ENCODE measurements at regions of chr11 and their contacts with region 1.

Region 1: DNA sequence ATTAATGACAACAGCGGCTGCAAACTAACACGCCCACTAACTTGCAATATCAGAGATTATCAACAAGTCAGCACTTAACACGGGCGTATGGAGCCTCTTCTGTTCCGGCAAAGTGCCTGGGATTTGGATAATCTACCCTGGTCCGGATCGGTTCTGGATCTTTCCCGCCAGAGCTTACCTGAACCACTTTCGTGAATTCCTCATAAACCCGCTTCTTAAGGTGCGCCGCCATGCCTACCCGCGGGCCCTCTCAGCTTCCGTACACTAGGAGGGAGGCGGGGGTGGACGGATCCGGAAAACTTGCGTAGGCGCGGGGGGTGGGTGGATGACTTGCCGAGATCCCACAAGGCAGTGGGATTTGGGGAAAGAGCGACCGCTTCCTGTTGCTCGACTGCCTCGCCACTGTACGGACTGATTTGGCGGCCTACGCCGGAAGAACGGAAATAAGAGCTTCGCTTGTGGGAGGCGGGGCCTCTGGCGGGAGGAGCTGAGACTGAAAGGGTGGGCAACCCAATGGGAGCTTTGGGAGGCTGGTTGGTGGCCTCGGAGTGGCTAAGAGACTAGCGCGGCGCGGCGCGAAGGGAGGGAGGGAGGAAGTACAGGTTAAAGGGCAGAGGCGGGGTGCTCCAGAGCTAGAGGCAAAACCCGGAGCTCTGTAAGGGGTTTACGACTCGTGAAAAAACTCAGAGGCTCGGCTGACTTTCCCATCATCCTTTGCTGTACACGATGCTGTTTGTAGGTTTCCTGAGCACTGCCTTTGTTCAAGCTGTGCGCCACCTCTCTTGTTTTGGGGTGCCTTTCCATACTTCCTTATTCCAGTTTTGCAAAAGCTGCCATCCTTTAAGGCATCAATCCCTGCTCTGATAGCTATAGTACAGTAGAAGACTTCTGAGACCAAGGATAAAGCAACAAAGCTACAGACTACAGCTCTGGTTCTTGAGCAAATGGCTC is at the start of gene INTS4:
- DNase-seq: peak; percentile 100
- H3K4me3 ChIP-seq: peak within 1 kb of the TSS; percentile 64
- H3K27ac ChIP-seq: peak within 1 kb of the TSS; percentile 72
- H3K4me1 ChIP-seq: peaks cover 9% of the 10 kb centered on the region
- H3K27me3 ChIP-seq: no peaks in the 10 kb centered on the region
- CTCF ChIP-seq: no peak
- total RNA-seq, gene INTS4: 66.1 and 68.2 TPM in 2 replicates

Region 2: GRCh38 chr11:77637345-77638165 is 357.1 kb before region 1 on chr11 and contains the start of gene CLNS1A:
- CTCF ChIA-PET with region 1: no interaction called
- POLR2A ChIA-PET with region 1: no interaction called
- intact Hi-C with region 1: loop called (anchors 10 kb)
- DNase-seq: peak; percentile 97
- H3K4me3 ChIP-seq: peak within 1 kb of the TSS; percentile 92
- H3K27ac ChIP-seq: peak within 1 kb of the TSS; percentile 87
- H3K4me1 ChIP-seq: peaks cover 12% of the 10 kb centered on the region
- H3K27me3 ChIP-seq: no peaks in the 10 kb centered on the region
- CTCF ChIP-seq: no peak
- total RNA-seq, gene CLNS1A: 186 and 198 TPM in 2 replicates

Region 3: GRCh38 chr11:77734890-77735289 is 259.8 kb before region 1 on chr11:
- CTCF ChIA-PET with region 1: no interaction called
- POLR2A ChIA-PET with region 1: no interaction called
- intact Hi-C with region 1: no loop called
- DNase-seq: no peak
- H3K4me3 ChIP-seq: no peak overlapping the region
- H3K27ac ChIP-seq: no peak overlapping the region
- H3K4me1 ChIP-seq: no peaks in the 10 kb centered on the region
- H3K27me3 ChIP-seq: no peaks in the 10 kb centered on the region
- CTCF ChIP-seq: no peak

Region 4: GRCh38 chr11:77776455-77776854 is 218.2 kb before region 1 on chr11:
- CTCF ChIA-PET with region 1: interaction called, 7 read pairs
- POLR2A ChIA-PET with region 1: no interaction called
- intact Hi-C with region 1: loop called (anchors 2 kb)
- DNase-seq: peak; percentile 50
- H3K4me3 ChIP-seq: no peak overlapping the region
- H3K27ac ChIP-seq: no peak overlapping the region
- H3K4me1 ChIP-seq: peaks cover 14% of the 10 kb centered on the region
- H3K27me3 ChIP-seq: no peaks in the 10 kb centered on the region
- CTCF ChIP-seq: peak; percentile 59

Region 5: DNA sequence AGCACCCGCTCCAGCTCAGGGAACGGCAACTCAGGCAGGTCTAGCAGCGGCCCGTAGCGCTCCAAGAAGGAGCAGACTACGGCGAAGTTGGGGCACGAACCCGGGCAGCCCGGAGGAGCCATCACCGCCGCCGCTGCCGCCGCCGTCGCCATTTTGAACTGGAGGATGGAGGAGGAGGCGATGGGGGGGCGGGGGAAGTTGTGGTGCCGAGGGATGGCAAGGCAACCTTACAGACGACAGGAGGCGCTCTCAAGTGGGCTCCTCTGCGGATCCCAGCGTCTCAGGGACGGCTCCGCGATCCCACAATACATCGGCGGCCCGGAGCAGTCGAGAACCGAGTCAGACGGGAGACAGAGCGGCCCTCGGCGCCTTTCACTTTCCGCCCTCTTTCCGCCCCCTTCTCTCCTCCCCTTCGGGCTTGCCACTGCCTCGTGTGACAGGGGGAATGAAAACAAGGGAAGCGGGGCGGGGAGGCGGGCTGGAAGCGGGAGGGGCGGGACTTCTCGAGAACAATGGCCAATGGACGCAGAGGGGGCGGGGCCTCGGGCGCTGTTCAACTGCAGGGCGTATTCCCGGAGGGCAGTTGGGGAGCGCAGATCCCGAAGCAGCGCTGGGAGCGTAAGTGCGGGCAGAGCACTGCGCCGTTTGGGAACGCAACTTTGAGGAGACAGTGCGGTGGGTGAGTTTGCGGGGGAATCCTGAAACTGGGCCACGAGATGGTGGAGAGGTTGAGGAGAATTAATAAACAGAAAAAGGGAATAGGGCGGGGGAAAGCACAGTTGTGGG is 173.9 kb before region 1 on chr11 and contains the starts of genes AAMDC and RSF1:
- CTCF ChIA-PET with region 1: interaction called, 5 read pairs
- POLR2A ChIA-PET with region 1: no interaction called
- intact Hi-C with region 1: loop called (anchors 2 kb)
- DNase-seq: peak; percentile 100
- H3K4me3 ChIP-seq: peak within 1 kb of the TSS; percentile 99
- H3K27ac ChIP-seq: peak within 1 kb of the TSS; percentile 95
- H3K4me1 ChIP-seq: peaks cover 8% of the 10 kb centered on the region
- H3K27me3 ChIP-seq: no peaks in the 10 kb centered on the region
- CTCF ChIP-seq: peak; percentile 90
- total RNA-seq, gene AAMDC: 15.7 and 18.1 TPM in 2 replicates
- total RNA-seq, gene RSF1: 94.1 and 112 TPM in 2 replicates

Region 6: DNA sequence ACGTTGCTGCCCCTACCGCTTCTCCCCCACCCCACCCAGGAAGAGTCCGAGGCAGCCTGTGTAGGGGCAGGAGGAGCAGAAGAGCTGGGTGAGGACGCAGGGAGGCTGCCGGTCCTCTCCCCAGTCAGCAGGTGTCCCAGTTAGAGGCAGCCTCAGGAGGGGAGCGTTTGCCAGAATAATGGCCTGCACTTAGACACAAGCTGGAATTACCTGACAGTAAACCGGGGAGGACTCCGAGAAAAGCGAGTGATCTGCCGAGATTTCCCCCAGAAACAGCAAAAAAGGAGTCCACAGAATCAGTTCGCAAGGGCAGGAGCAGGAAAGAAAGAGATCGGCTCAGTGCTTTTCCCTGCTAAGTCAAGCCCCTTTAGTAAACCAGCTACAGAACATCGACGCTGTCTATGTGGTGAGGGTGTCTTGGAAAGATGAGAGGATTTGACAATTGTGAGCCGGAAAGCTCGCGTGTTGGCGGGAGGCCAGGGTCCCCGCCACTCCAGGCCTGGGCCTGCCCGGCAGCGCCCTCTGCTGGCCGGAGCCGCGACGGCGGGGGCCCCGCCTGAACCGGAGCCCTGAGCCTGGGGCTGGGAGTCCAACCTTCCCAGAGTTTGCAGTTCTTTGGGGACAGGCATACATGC is 51.3 kb after region 1 on chr11:
- CTCF ChIA-PET with region 1: interaction called, 6 read pairs
- POLR2A ChIA-PET with region 1: no interaction called
- intact Hi-C with region 1: loop called (anchors 1 kb)
- DNase-seq: peak; percentile 91
- H3K4me3 ChIP-seq: peak overlapping the region; percentile 27
- H3K27ac ChIP-seq: no peak overlapping the region
- H3K4me1 ChIP-seq: peaks cover 18% of the 10 kb centered on the region
- H3K27me3 ChIP-seq: no peaks in the 10 kb centered on the region
- CTCF ChIP-seq: peak; percentile 100

Measured in A673 (cell line).